Activated B cell treated with CpG ODN at 0.5 μM for 24 hours (primary cell): ENCODE measurements at regions of chr1 and their contacts with region 1.

Region 1: DNA sequence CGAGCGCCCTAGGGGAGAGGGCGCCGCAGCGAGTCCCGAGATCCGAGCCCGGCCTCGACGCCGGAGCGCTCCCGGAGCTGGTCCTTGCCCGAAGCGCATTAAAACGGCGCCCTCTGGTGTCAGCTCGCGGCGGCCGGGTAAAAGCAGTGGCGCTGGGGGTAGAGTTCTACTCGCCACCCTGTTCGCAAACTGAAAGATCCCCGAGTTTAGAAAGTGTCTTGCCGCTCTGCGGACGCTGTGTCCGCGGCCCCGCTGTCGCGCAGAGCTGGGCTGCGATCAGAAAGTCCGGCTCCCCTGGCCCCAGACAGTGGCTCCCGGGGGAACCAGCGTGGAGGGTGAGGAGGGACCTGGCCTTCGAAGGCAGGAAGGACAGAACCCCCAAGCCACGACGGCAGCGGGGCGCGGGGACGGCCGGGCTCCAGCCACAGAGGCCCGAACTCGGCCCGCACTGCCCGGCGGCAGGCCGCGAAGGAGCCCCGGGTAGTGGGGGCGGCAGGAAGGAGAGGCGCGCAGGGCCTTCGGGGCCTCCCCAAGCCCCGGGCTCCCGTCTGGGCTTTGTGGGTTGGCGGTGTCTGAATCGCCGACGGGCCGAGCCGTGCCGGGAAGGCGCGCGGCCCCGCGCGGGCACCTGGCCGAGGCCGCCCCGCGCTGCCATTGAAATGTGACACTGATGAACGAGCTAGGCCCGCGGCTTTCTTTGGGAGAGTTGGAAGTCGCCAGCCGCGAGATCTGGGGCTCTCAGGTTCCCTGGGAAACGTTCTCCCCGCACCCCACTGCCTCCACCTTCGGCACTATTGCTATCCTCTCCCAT is 39.1 kb upstream of the NFIA start:
- DNase-seq: peak; percentile 66
- ATAC-seq: peak; percentile 80
- H3K4me3 Mint-ChIP-seq: peak overlapping the region; percentile 72
- H3K27ac Mint-ChIP-seq: no peak overlapping the region
- H3K4me1 Mint-ChIP-seq: peaks cover 8% of the 10 kb centered on the region
- H3K27me3 Mint-ChIP-seq: peaks cover 46% of the 10 kb centered on the region
- CTCF ChIP-seq: no peak

Region 2: GRCh38 chr1:59971464-59971911 is 1071.7 kb before region 1 on chr1:
- CTCF ChIA-PET with region 1: interaction called, 3 read pairs
- POLR2A ChIA-PET with region 1: no interaction called
- intact Hi-C with region 1: loop called (anchors 2 kb)
- DNase-seq: no peak
- ATAC-seq: no peak
- H3K4me3 Mint-ChIP-seq: no peak overlapping the region
- H3K27ac Mint-ChIP-seq: no peak overlapping the region
- H3K4me1 Mint-ChIP-seq: peaks cover 2% of the 10 kb centered on the region
- H3K27me3 Mint-ChIP-seq: peaks cover 17% of the 10 kb centered on the region
- CTCF ChIP-seq: no peak

Region 3: GRCh38 chr1:60156371-60156770 is 886.8 kb before region 1 on chr1:
- CTCF ChIA-PET with region 1: no interaction called
- POLR2A ChIA-PET with region 1: no interaction called
- intact Hi-C with region 1: loop called (anchors 5 kb)
- DNase-seq: no peak
- ATAC-seq: no peak
- H3K4me3 Mint-ChIP-seq: no peak overlapping the region
- H3K27ac Mint-ChIP-seq: no peak overlapping the region
- H3K4me1 Mint-ChIP-seq: no peaks in the 10 kb centered on the region
- H3K27me3 Mint-ChIP-seq: no peaks in the 10 kb centered on the region
- CTCF ChIP-seq: no peak